Posterior vena cava (tissue), 2 donors: ENCODE measurements at regions of chr2 and their contacts with region 1.

Region 1: DNA sequence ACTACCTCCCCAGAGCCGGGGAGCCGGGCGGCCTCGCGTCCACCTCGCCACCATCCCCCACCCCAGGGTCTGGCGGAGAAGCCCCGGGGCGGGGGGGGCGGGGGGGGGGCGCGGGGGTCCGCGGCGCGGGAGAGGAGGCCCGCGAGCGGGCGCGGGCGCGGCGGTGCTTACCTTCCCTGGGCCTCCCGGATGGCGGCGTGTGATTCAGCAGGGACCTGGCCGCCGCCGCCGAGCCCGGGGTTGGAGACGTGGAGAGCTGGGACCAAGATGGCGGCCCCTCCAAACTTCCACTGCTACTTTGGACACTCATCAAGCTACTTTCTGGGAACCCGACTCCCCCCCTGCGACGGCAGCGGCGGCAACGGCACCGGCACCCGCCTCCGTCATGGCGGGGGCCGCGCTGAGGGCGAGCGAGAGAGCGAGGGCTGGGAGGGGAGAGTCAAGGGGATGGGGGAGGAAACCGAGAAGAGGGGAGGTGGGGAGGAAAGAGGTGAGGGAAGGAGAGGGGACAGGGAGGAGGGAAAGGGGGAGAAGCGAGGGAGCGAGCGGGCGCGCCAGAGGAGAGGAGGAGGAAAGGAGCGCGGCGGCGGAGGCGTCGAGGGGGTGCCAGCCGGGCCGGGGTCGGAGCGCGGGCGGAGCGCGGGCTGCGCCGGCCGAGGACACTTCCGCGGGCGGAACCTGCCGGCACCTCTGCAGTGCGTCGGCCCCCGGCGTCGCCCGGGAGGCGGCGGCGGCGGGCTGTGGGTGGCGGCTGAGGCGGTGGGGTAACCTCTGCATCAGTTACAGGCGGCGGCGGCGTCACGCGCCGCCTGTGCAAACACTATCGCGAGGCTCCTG is at the start of gene TLK1:
- DNase-seq: peak; percentile 93
- total RNA-seq, gene TLK1: 48.6 to 55.3 TPM

Region 2: GRCh38 chr2:171069286-171069956 is 90.9 kb before region 1 on chr2:
- intact Hi-C with region 1: no loop called
- DNase-seq: no peak

Region 3: DNA sequence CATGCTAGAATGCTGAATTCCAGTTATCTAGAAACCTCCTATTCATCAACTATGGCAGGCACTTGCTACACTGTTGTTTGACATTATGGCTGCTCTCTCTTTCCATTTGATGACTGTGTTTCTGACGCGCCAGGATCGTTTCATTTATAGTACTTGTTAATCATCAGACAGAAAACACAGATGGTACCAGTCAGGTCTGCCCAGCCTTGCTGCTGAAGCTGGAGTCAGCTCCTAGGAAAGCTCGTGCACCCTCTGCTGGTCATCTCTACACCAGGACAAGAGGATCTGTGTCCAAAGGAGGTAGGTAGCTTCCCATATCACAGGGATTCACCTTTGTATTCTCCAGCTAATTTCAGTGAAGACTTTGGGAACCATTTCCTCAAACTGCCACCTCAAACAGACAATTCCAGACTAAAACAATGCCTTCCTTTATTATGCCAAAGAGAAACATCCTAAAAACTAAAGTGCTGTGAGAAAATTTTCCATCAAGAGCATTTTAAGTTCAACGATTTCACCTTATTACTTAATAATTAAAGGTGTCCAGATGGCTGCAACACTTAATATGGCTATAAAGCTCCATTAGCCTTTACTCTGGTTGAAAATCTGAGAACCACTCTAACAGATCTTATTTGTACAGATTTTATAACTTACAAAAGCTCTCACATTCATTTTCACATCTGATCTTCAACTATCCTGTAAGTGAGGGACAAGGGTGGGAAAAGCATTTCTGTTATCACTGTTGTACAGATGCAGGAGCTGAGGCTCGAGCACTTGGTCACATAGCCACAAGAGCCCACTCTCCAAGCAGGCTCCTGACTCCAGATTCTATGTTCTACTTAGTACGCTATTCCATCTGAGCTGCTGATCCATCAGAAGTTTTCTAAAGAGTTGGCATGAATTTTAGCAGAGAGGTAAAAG is 255.9 kb after region 1 on chr2:
- intact Hi-C with region 1: loop called in 1 of 2 experiments (anchors 10 kb)
- DNase-seq: peak; percentile 92